ENCODE measurements at regions of chr2 and their contacts with region 1.

Region 1: GRCh38 chr2:118855451-118856279 is 8.2 kb upstream of the EN1 start:
- DNase-seq: peak; percentile 78 to 91
- H3K4me3 ChIP-seq: peak overlapping the region; percentile 40
- H3K4me1 ChIP-seq: no peaks in the 10 kb centered on the region
- H3K27me3 ChIP-seq: peaks cover 25% of the 10 kb centered on the region

Region 2: DNA sequence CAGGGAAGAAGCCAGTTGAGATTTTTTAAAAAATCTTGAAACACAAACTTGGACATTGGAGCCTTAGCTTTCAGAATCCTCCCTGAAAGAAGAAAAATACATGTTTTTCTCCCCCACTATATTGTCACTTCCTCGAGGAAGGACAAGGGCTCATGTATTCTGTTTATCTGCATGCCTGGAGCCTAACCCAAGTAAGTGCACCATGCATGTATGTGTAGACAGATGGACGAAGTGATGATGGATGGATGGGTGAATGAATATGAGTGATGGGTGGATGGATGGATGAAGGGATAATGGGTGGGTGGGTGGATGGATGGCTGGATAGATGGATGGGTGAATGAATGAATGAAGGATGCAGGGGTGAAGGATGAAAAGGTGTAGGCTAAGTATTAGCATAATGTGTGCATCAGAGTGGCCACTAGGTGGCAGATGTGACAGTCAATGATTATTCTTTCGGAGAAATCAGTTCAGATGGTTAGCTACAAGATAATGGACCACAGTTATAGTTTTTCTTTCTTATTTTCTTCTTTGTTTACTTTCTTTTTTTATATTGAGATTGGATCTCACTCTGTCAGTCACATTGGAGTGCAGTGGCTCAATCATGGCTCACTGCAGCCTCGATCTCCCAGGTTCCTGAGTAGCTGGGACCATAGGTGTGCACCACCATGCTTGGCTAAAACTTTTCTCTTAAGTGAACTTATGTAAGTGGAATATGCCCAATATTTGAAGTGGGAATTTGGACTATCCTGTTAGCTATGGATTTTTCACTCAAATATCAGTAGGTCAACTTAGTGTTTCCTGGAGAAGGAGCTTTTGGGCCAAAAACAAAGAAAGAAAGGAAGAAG is 823.3 kb before region 1 on chr2:
- in situ Hi-C with region 1: loop called (anchors 25 kb)
- DNase-seq: peak; percentile 43 to 56
- H3K4me3 ChIP-seq: no peak overlapping the region
- H3K4me1 ChIP-seq: peaks cover 1% of the 10 kb centered on the region; the same call in 1 of the 2 replicates
- H3K27me3 ChIP-seq: 0 out of 2 replicates have a peak, but pooled peaks cover 4% of the 10 kb centered on the region

Region 3: GRCh38 chr2:118584062-118584749 is 271.5 kb before region 1 on chr2:
- in situ Hi-C with region 1: no loop called
- DNase-seq: no peak
- H3K4me3 ChIP-seq: no peak overlapping the region
- H3K4me1 ChIP-seq: no peaks in the 10 kb centered on the region
- H3K27me3 ChIP-seq: no peaks in the 10 kb centered on the region

Region 4: GRCh38 chr2:118774458-118775133 is 81.1 kb before region 1 on chr2:
- in situ Hi-C with region 1: loop called (anchors 5 kb)
- DNase-seq: peak; percentile 51 to 88
- H3K4me3 ChIP-seq: peak overlapping the region; percentile 31
- H3K4me1 ChIP-seq: peaks cover 9% of the 10 kb centered on the region
- H3K27me3 ChIP-seq: no peaks in the 10 kb centered on the region

Region 5: DNA sequence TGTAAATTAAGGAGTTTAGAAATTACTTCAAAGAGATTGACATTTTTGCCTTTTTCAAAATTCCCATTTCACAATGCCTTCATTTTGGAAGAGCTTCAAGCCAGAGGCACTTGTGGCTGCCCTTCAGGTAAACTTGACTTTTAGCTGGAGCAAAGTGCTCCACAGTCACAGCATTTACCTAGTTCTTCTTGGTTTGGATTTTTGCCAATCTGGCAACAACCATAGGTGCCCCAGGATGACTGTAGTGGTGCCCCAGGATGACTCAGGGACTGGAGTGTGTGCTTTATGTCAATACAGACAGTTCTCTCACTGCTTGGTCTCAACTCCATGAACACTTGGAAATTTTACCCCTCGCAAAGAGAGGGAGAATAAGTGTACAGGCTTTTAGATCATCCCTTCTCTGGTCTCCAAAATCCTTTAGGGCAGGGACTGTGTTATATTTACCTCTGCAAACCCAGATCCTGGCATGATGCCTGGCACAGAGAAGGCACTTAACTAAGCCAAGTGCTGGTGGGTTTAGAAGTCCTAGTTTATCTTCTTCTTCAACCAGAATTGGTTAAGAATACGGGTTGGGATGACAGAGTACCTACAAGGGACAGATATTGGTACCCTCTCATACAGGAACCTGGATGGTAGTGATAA is 888.8 kb after region 1 on chr2:
- in situ Hi-C with region 1: no loop called
- DNase-seq: no peak
- H3K4me3 ChIP-seq: no peak overlapping the region
- H3K4me1 ChIP-seq: no peaks in the 10 kb centered on the region
- H3K27me3 ChIP-seq: peaks cover 11% of the 10 kb centered on the region

Measured in HAP-1 (cell line).